ENCODE measurements at regions of chr1 and their contacts with region 1.

Region 1: GRCh38 chr1:12376106-12377045 is 146.5 kb downstream of the VPS13D start:
- DNase-seq: peak in 2 of 10 donors; percentile 30 to 51
- H3K4me3 ChIP-seq: no peak overlapping the region
- H3K27ac ChIP-seq: peak overlapping the region in 51 of 59 donors; percentile 2 to 87 (median 61)
- H3K27me3 ChIP-seq: no peaks in the 10 kb centered on the region
- CTCF ChIP-seq: no peak

Region 2: DNA sequence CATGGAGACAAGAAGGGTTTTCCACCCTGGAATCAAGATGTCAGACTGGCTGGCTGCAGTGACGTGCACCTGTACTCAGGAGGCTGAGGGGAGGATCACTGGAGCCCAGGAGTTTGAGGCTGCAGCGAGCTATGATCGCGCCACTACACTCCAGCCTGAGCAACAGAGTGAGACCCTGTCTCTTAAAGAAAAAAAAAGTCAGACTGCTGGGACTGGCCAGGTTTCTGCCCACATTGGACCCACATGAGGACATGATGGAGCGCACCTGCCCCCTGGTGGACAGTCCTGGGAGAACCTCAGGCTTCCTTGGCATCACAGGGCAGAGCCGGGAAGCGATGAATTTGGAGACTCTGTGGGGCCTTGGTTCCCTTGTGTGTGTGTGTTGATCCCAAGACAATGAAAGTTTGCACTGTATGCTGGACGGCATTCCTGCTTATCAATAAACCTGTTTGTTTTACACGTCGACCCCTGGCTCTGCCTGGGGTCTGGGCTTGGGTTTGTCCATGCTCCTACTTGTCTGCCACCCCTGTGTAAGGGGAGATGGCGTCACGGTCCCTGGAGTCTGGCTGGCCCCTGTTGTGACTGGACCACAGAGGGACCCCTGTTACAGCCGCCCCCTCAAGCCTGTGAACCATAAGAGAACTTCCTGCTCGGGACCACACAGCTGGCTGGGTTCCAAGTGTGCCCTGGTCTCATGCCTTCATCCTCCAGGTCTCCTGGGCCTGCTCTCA is 167.4 kb before region 1 on chr1:
- intact Hi-C with region 1: no loop called
- DNase-seq: peak; percentile 80 to 94 (median 86)
- H3K4me3 ChIP-seq: no peak overlapping the region
- H3K27ac ChIP-seq: peak overlapping the region in 2 of 59 donors; percentile 18 to 51
- H3K27me3 ChIP-seq: no peaks in the 10 kb centered on the region
- CTCF ChIP-seq: peak; percentile 71 to 99 (median 96)

Region 3: DNA sequence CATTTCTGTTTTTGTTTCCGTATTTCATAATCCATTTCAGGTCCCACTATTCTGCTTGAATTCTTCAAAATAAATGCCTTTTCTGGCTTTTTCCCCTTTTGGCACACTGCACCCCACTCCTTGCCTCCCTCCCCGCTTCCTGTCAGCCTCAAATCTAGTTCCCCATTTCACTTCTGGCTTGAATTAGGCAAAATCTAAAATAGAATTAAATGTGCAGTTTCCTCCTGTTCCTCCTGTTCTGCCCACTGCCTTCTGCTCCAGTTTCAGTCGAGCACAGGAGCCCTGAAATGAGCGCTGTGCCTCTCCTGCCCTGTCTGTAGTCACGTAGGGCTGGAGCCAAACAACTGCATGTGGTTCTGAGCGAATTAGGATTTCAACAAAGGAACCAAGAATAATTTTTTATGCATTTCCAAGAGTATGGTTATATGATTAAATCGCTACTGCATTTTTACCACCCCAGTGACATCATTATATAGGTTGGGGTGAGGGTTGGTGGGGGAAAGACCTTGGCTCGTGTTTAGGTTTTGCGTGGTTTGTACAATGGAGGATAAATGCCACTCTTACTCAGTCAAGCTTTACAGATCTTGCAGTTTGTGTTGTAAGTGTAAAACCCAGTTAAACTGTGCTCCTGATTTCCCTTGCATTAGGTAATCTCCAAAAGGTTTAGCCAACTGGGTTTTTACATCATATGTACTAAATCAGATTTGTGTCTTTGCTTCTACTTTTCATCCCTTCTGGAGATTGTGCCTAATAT is 31.6 kb before region 1 on chr1:
- intact Hi-C with region 1: loop called in 1 of 2 experiments (anchors 1 kb)
- DNase-seq: peak in 9 of 10 donors; percentile 9 to 83 (median 65)
- H3K4me3 ChIP-seq: peak overlapping the region in 36 of 59 donors; percentile 7 to 46 (median 28)
- H3K27ac ChIP-seq: peak overlapping the region in 58 of 59 donors; percentile 23 to 96 (median 84)
- H3K27me3 ChIP-seq: no peaks in the 10 kb centered on the region
- CTCF ChIP-seq: no peak